Psoas muscle (tissue), 8 donors: ENCODE measurements at regions of chr5 and their contacts with region 1.

Region 1: DNA sequence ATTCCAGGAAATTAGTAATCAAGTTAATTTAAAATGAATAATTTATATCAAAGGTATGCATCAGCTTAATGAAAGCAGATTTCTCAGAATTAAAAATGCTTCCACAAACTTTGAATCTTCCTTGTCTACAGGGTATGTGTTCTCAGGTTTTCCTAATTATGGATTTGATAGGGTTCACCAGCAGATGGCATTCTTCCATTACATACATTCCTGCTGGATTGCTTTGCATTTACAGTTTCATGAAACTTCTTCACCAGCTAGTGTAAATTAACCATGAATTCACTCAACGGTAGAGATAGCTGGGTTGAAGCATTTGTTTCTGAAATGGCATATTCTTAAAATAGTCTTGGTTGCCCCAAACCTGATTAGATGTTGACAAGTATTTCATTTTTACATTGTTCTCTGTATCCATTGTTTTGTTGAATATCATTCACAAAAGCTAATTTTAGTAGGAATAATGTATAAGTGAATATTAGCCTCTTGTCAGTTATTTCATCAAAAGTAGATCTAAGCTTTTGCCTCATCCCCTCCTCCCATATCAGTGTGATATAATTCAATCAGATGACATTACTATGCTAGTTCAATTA is 68.7 kb upstream of the WDR41 start:
- DNase-seq: no peak
- ATAC-seq: no peak
- H3K4me3 ChIP-seq: no peak overlapping the region
- H3K27ac ChIP-seq: no peak overlapping the region
- H3K4me1 ChIP-seq: no peaks in the 10 kb centered on the region
- H3K27me3 ChIP-seq: no peaks in the 10 kb centered on the region
- CTCF ChIP-seq: peak; percentile 50

Region 2: DNA sequence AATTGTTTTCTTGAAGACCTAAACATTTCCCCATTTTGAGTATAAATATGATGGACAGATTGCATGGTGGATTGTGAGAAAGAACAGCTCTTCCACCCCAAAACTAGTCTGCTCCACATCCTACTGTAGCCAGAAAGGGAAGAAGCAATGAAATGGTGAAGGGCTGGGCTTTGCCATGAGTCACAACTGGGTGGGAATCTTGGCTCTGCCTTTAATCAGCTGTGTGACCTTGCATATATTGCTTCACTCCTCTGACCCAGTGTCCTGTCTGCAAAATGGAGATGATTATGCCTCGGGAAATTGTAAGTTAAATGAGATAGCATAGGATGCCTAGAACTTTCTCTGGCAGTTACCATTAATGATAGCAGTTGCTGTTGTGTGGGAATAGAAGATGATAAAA is 248.4 kb before region 1 on chr5:
- intact Hi-C with region 1: no loop called
- DNase-seq: no peak
- ATAC-seq: no peak
- H3K4me3 ChIP-seq: no peak overlapping the region
- H3K27ac ChIP-seq: no peak overlapping the region
- H3K4me1 ChIP-seq: no peaks in the 10 kb centered on the region
- H3K27me3 ChIP-seq: no peaks in the 10 kb centered on the region
- CTCF ChIP-seq: no peak

Region 3: DNA sequence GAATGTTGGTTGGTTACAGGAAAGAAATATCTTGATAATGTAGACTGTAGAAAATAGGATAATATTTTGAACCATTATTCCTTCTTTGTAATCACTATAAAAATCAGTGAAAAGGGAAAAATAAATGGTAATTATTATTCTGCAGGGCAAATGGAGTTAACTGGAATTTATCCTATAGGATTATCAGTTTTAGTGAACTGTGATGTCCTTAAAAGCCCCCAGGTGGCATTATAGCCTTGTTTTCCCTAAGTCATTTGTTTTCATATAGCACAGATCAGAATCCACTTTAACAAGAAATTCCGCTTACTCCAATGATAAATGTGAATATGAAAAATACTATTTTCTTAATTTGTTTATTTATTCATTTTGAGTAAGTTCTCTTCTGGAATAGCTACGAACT is 42.5 kb before region 1 on chr5:
- intact Hi-C with region 1: no loop called
- DNase-seq: no peak
- ATAC-seq: no peak
- H3K4me3 ChIP-seq: no peak overlapping the region
- H3K27ac ChIP-seq: no peak overlapping the region
- H3K4me1 ChIP-seq: no peaks in the 10 kb centered on the region
- H3K27me3 ChIP-seq: peaks cover 0 to 5% (median 0%) of the 10 kb centered on the region in 3 donors
- CTCF ChIP-seq: peak; percentile 24

Region 4: DNA sequence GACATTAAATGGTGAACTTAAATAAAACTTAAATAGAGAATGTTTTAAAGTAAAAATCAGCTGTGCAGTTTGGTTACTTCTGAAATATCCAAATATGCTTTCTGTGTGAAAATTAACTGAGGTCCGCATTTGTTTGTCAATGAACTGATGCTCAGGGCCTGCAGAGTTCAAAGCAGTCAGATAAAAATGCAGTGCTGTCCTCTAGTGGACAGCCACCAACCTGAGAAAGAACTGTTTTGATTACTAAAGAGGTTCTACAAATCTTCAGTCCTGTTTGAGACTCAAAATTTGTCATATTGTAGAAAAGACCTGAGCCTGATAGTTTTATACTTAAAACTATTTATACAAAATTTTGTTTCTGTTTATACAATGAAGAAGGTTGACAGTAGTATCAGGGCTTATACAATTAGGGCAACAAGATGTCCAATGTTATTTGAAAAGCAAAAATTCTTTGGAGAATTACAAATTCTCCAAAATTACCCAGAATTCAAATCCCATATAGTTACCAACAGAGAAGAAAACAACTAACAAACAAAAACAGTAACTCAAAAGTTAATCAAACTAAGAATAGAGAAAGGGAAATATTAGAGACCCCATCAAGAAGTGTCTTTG is 447.7 kb after region 1 on chr5:
- intact Hi-C with region 1: loop called in 1 of 2 experiments (anchors 10 kb)
- DNase-seq: no peak
- ATAC-seq: peak in 1 of 4 donors; percentile 48
- H3K4me3 ChIP-seq: no peak overlapping the region
- H3K27ac ChIP-seq: no peak overlapping the region
- H3K4me1 ChIP-seq: no peaks in the 10 kb centered on the region
- H3K27me3 ChIP-seq: no peaks in the 10 kb centered on the region
- CTCF ChIP-seq: peak; percentile 71

Region 5: DNA sequence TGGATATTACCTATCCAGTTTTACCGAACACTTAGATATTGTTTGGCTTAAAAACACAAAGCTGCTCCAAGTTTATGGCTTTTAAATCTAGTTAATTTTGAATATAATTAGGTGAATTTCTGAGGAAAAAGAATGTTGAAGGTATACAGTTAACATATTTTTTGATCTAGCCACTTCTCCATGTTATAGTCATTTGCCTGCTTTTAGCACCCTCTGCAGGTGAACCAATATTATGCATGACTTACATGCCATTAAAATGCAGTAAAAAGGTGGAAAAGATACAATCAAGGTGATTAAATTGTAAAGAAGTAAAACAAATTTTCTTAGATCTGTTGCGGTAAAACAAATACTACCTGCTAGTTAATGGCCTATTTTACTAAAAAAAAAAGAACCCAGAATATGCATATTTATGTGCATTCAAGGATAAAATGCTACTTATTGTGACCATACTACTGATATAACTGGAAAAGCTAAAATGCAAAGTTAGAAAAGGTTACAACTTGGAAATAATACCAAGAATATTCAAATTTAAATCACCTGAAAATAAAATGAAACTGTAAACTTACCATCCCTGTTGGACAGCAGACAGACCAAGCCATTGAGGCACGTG is 601.6 kb after region 1 on chr5:
- intact Hi-C with region 1: loop called in 1 of 2 experiments (anchors 5 kb)
- DNase-seq: no peak
- ATAC-seq: no peak
- H3K4me3 ChIP-seq: no peak overlapping the region
- H3K27ac ChIP-seq: no peak overlapping the region
- H3K4me1 ChIP-seq: no peaks in the 10 kb centered on the region
- H3K27me3 ChIP-seq: no peaks in the 10 kb centered on the region
- CTCF ChIP-seq: peak; percentile 47

Region 6: DNA sequence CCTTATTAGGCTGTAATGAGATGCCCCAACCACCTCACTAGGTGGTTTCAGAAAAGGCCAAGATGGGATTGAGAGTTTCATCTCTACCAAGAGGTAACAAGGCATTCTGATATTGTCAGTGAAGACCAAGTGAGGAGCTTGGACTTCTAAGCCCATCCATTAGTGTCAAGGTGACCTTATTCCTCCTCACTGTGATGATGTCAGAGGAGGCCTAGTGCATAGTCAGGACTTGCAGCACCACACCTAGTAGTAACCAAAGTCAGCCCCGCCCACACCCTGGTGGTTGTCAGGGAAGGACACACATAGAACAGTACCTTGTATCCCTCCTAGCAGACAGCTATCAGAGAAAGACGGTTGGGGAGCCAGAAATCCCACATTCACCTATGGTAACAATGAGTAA is 622.0 kb after region 1 on chr5:
- intact Hi-C with region 1: no loop called
- DNase-seq: no peak
- ATAC-seq: no peak
- H3K4me3 ChIP-seq: no peak overlapping the region
- H3K27ac ChIP-seq: no peak overlapping the region
- H3K4me1 ChIP-seq: no peaks in the 10 kb centered on the region
- H3K27me3 ChIP-seq: no peaks in the 10 kb centered on the region
- CTCF ChIP-seq: no peak